Activated CD4-positive, alpha-beta T cell treated with anti-CD3 and anti-CD28 coated beads for 36 hours (primary cell): ENCODE measurements at regions of chr10 and their contacts with region 1.

Region 1: DNA sequence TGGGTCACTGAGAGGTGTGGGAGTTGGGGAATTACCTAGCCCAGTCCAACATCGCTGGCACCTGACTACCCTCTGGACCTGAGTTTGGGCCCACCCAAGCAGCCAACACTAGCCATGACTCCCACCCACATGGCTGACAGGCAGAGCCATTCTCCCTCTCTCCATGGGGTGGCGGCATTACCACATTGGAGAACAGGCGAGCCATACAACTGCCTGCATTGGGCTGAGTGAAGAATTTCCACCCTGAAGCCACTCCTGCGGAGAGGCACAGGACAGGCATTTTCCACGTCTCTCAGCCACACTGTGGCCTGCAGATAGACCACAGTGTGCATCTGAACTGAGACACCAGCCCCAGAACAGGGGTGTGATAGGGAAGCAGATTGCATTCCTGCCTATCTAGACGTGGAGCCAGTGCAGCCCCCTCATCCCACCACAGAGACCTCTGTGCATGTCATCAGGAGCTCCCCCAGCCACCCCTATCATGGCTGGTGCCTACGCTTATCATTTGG is 58.2 kb upstream of the ANTXRL start:
- DNase-seq: peak; percentile 85
- ATAC-seq: peak; percentile 92
- H3K4me3 Mint-ChIP-seq: no peak overlapping the region
- H3K27ac Mint-ChIP-seq: no peak overlapping the region
- H3K4me1 Mint-ChIP-seq: peaks cover 6% of the 10 kb centered on the region
- H3K27me3 Mint-ChIP-seq: no peaks in the 10 kb centered on the region

Region 2: GRCh38 chr10:45532480-45532879 is 696.1 kb before region 1 on chr10:
- CTCF ChIA-PET with region 1: no interaction called
- POLR2A ChIA-PET with region 1: no interaction called
- intact Hi-C with region 1: no loop called
- DNase-seq: no peak
- ATAC-seq: no peak
- H3K4me3 Mint-ChIP-seq: no peak overlapping the region
- H3K27ac Mint-ChIP-seq: no peak overlapping the region
- H3K4me1 Mint-ChIP-seq: peaks cover 4% of the 10 kb centered on the region
- H3K27me3 Mint-ChIP-seq: no peaks in the 10 kb centered on the region

Region 3: DNA sequence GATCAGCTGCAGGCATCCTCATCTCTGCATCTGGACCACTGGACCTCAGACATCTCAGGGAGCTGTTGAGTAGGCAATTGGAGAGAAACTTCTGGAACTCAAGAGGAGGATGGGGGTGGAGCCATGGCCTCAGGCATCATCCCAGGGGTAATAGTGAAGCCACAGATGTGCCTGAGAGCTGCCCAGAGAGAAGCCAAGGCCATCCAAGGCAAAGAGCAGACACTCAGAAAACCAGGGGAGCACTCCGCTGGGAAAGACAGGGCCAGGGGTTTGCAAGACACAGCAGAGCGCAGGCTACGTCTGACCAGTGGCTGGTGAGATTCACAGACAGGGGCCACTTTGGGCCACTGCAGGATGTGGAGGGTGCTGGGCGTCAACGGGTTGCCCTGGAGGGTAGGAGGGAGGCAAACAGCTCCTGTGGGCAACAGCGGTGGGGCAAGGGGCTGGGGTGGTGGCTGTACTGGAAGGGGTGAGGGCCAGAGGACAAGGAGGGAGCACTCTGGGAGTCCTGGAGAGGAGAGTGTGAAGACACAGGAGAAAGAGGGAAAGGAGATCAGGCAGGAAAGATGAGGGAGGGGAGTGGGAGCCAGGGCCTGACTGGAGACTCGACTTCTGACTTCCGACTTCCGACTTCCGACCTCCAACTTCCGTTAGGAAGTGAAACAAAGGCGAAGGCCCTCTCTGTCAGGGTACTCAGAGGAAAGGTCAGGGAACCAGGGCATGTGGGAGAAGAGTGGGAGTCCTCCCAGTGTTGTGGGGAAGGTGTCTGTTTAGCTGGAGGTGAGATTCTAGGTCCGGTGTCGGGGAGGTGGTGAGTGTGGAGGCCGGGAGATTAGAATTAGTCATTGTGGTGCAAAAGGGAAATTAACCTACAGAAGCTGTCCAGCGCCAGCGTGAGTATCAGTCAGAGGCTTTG is 11.5 kb before region 1 on chr10:
- CTCF ChIA-PET with region 1: interaction called, 18 read pairs
- POLR2A ChIA-PET with region 1: no interaction called
- intact Hi-C with region 1: no loop called
- DNase-seq: no peak
- ATAC-seq: peak; percentile 55
- H3K4me3 Mint-ChIP-seq: no peak overlapping the region
- H3K27ac Mint-ChIP-seq: no peak overlapping the region
- H3K4me1 Mint-ChIP-seq: no peaks in the 10 kb centered on the region
- H3K27me3 Mint-ChIP-seq: no peaks in the 10 kb centered on the region

Region 4: DNA sequence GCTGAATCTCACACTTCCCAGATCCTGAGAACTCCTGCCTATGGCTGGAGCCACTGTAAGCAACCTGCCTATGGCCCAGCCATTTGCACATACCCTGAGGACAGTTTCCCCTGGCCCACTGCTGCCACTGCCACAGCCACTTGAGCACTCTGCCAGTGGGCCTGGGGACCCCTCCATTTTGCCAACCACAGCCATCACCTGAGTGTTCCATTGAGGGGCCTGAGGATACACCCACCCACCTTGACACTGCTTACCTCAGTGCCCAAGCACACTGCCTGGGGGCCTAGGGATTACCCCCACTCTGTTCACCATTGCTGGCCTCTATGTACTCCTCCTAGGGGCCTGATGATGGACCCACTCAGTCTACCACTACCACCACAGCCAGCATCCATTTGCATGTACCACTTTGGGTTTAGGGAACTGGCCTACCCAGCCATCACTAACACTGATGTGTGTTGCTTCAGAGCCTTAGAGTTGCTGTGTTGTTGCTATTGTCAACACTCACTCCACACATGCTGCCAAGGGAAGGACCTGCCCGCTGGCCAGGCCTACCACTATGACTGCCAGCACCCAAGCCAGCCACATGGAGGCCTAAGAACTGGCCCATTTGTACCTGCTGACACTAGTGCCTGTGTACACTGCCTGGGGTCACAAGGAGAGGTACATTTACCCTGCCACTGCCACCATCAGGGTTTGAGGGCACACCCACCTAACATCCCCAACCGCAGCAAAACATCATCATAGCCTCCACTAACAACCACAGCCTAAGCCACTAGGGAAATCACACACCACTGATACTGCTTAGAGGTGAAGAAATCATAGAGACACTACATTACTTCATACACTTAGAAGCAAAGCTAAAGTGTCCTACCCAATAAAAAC is 12.3 kb after region 1 on chr10:
- CTCF ChIA-PET with region 1: interaction called, 21 read pairs
- POLR2A ChIA-PET with region 1: no interaction called
- intact Hi-C with region 1: no loop called
- DNase-seq: no peak
- ATAC-seq: no peak
- H3K4me3 Mint-ChIP-seq: no peak overlapping the region
- H3K27ac Mint-ChIP-seq: no peak overlapping the region
- H3K4me1 Mint-ChIP-seq: peaks cover 22% of the 10 kb centered on the region
- H3K27me3 Mint-ChIP-seq: no peaks in the 10 kb centered on the region